SK-N-SH (cell line): ENCODE measurements at regions of chr2 and their contacts with region 1.

Region 1: DNA sequence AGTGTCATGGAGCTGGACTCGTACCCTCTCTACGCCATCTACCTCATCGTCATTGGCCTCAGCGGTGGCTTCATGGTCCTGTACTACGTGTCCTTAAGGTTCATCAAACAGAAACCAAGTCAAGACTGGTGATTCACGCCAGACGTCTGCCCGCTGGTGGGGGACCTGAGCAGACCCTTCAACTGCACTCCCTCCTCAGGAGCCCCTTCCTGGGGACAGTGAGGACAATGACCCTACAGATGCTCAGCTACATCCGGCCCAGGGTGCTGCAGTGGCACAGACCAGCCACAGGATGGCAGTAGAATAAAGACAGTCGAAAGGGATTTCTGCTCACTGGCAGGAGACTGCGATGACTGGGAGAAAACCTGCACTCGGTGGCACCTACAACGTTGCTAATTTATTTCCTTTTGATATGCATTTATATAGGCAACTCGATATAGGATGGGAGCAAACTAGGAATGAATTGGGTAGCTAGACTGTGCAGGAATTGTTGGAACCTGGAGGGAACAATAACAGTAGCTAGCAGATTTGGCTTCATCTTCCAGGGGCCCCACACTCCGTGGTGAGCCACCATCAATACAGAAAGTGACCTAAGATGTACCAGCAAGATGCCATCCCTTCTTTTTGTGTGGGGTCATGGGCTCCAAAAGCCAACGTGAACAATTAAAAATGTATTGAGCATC is 39.2 kb downstream of the ABCG8 start:
- DNase-seq: peak; percentile 87
- H3K4me3 ChIP-seq: peak overlapping the region in 1 of 2 experiments; percentile 38; a peak in 1 of 4 replicates
- H3K27ac ChIP-seq: no peak overlapping the region
- H3K4me1 ChIP-seq: peaks cover 0 to 7% of the 10 kb centered on the region in 2 experiments; a peak in 1 of 4 replicates
- H3K27me3 ChIP-seq: no peaks in the 10 kb centered on the region; the same call in 1 of the 2 replicates
- CTCF ChIP-seq: peak; percentile 98
- EP300 ChIP-seq: no peak
- RAD21 ChIP-seq: peak; percentile 96

Region 2: GRCh38 chr2:43848214-43848613 is 29.7 kb before region 1 on chr2:
- CTCF ChIA-PET with region 1: interaction called, 10 read pairs
- POLR2A ChIA-PET with region 1: no interaction called
- DNase-seq: peak; percentile 4
- H3K4me3 ChIP-seq: no peak overlapping the region
- H3K27ac ChIP-seq: no peak overlapping the region
- H3K4me1 ChIP-seq: no peaks in the 10 kb centered on the region
- H3K27me3 ChIP-seq: peaks cover 11% of the 10 kb centered on the region; the same call in 1 of the 2 replicates
- CTCF ChIP-seq: no peak
- EP300 ChIP-seq: no peak
- RAD21 ChIP-seq: no peak

Region 3: GRCh38 chr2:43898134-43898837 is 20.4 kb after region 1 on chr2:
- CTCF ChIA-PET with region 1: interaction called, 65 read pairs
- POLR2A ChIA-PET with region 1: no interaction called
- DNase-seq: peak; percentile 39
- H3K4me3 ChIP-seq: no peak overlapping the region
- H3K27ac ChIP-seq: no peak overlapping the region
- H3K4me1 ChIP-seq: no peaks in the 10 kb centered on the region
- H3K27me3 ChIP-seq: no peaks in the 10 kb centered on the region
- CTCF ChIP-seq: peak; percentile 34
- EP300 ChIP-seq: no peak
- RAD21 ChIP-seq: no peak

Region 4: DNA sequence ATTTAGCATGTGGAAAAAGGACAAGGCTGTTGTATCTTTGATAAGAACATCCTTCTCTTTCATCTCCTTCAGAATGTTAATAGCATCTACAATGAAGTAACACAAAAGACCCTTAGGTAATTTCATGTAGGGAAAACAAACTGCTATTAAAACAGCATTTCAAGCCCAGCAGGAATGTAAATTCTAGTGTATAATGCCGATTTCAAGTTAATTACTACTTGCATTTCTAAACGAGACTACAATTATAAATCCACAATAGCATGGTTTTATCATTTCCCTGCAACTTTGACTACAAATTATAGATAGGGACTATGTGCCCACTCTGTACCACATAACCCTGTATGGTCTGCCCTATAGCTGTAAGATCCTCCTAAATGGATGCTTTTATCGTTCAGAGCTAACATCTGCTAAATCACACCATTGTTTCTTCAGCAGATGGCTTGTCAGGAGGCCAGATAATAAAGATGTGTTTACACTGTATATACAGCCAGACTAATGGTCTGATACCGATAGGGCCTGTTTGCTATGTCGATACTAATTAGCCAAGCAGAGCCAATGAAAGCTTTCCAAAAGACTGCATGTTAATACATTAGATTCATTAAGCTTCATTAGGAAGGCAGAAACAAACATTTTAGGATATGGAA is 66.0 kb after region 1 on chr2:
- CTCF ChIA-PET with region 1: interaction called, 77 read pairs
- POLR2A ChIA-PET with region 1: no interaction called
- DNase-seq: peak; percentile 77
- H3K4me3 ChIP-seq: no peak overlapping the region
- H3K27ac ChIP-seq: peak overlapping the region in 1 of 2 experiments; percentile 95; a peak in 2 of 4 replicates
- H3K4me1 ChIP-seq: peaks cover 0 to 48% of the 10 kb centered on the region in 2 experiments; a peak in 2 of 4 replicates
- H3K27me3 ChIP-seq: no peaks in the 10 kb centered on the region
- CTCF ChIP-seq: no peak
- EP300 ChIP-seq: peak; percentile 7 to 96; a peak in 2 of 4 replicates
- RAD21 ChIP-seq: no peak

Region 5: GRCh38 chr2:43958397-43959275 is 80.7 kb after region 1 on chr2:
- CTCF ChIA-PET with region 1: interaction called, 16 read pairs
- POLR2A ChIA-PET with region 1: no interaction called
- DNase-seq: no peak
- H3K4me3 ChIP-seq: no peak overlapping the region
- H3K27ac ChIP-seq: no peak overlapping the region
- H3K4me1 ChIP-seq: no peaks in the 10 kb centered on the region
- H3K27me3 ChIP-seq: no peaks in the 10 kb centered on the region
- CTCF ChIP-seq: no peak
- EP300 ChIP-seq: no peak
- RAD21 ChIP-seq: no peak

Region 6: GRCh38 chr2:44291281-44292248 is 413.6 kb after region 1 on chr2:
- CTCF ChIA-PET with region 1: interaction called, 12 read pairs
- POLR2A ChIA-PET with region 1: no interaction called
- DNase-seq: peak; percentile 76
- H3K4me3 ChIP-seq: peak overlapping the region; percentile 1 to 46; a peak in 2 of 4 replicates
- H3K27ac ChIP-seq: peak overlapping the region in 1 of 2 experiments; percentile 58; a peak in 2 of 4 replicates
- H3K4me1 ChIP-seq: peaks cover 6 to 15% of the 10 kb centered on the region in 2 experiments; a peak in 2 of 4 replicates
- H3K27me3 ChIP-seq: no peaks in the 10 kb centered on the region
- CTCF ChIP-seq: peak; percentile 83
- EP300 ChIP-seq: peak in 1 of 2 experiments; percentile 14; a peak in 1 of 4 replicates
- RAD21 ChIP-seq: peak; percentile 91